B cell (primary cell): ENCODE measurements at regions of chr7 and their contacts with region 1.

Region 1: DNA sequence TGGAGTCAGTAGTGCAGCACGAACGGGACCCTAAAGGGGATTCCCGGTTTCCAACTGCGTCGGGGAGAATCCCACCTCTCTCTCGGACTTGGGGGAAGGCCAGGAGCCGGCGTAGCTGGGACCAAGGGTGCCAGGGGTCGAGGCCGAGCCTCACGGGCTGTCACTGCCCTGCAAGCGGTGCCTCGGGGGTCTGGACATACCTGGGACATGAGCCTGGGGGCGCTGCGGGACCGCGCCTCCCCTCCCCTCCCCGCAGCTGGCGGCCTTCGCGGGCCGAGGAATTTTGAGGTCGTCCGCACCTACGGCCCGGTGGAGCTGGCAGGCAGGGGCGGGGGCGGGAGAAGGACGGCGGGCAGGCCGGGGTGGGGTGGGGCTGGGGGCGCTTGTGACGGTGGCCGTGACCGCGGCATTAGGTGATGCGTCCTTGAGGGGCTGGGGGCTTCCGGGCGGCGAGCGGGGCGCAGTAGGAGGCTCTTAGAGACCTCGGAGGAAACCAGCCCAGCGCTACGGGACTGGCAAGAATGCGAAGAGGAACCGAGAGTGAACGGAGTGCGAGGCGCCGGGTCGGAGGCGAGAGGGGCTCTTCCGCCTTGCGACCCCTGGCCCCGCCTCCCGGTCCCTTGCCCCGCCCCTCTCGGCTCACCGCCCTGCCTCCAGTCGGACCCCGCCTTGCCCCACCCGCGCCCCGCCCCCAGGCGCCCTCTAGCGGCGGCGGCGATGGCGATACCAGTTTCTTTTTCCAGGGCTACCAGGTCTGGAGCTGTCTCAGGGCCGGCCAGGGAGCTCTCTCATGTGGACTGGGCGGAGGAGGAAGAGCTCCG is 48.3 kb downstream of the NPVF start:
- DNase-seq: peak; percentile 97
- ATAC-seq: peak; percentile 99
- H3K4me3 ChIP-seq: peak overlapping the region; percentile 44 to 77 (median 74)
- H3K4me3 Mint-ChIP-seq: peak overlapping the region; percentile 90
- H3K27ac ChIP-seq: peak overlapping the region; percentile 92 to 94
- H3K27ac Mint-ChIP-seq: peak overlapping the region; percentile 96
- H3K4me1 ChIP-seq: peaks cover 7 to 15% of the 10 kb centered on the region in 2 donors
- H3K4me1 Mint-ChIP-seq: peaks cover 17% of the 10 kb centered on the region
- H3K27me3 ChIP-seq: peaks cover 0 to 3% (median 0%) of the 10 kb centered on the region in 4 experiments
- H3K27me3 Mint-ChIP-seq: peaks cover 4% of the 10 kb centered on the region
- CTCF ChIP-seq: peak; percentile 87

Region 2: GRCh38 chr7:25117226-25118047 is 62.5 kb before region 1 on chr7:
- CTCF ChIA-PET with region 1: interaction called, 8 read pairs
- POLR2A ChIA-PET with region 1: interaction called, 5 read pairs
- intact Hi-C with region 1: loop called (anchors 2 kb)
- DNase-seq: peak; percentile 81
- ATAC-seq: peak; percentile 89
- H3K4me3 ChIP-seq: peak overlapping the region; percentile 12 to 54 (median 40)
- H3K4me3 Mint-ChIP-seq: peak overlapping the region; percentile 87
- H3K27ac ChIP-seq: peak overlapping the region; percentile 71 to 82
- H3K27ac Mint-ChIP-seq: peak overlapping the region; percentile 97
- H3K4me1 ChIP-seq: peaks cover 27% of the 10 kb centered on the region in 2 donors
- H3K4me1 Mint-ChIP-seq: peaks cover 41% of the 10 kb centered on the region
- H3K27me3 ChIP-seq: no peaks in the 10 kb centered on the region
- H3K27me3 Mint-ChIP-seq: no peaks in the 10 kb centered on the region
- CTCF ChIP-seq: no peak

Region 3: DNA sequence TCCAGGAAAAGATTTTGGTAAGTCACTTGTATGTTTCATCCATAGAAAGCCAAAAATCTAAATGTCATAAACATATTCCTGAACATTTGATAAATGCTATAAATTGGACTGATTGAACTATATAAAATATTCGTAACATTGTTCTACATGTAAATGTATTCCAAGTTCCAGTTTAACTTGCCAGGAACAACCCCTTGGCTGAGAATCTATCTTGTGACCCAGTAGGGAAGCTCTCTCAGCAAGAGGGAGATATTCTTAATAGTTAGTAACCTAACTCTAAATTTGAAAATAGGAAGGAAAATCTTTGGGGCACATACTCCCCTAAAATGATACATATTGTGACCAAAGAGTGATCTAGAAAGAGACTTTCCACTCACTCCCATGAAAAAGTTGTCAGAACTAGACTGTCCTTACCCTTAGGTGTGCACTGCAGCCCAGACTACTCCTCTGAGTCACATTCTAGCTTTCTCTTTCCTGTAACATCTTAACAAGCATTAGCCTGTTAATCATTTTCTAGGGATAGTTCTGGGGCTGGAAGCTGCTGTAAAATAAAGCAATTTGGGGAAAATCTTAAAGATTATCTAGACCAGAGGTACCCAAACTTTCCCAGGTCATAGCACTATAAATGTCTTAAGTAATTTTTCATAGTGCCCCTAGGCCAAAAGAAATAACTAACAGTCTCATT is 1758.1 kb after region 1 on chr7:
- CTCF ChIA-PET with region 1: no interaction called
- POLR2A ChIA-PET with region 1: no interaction called
- intact Hi-C with region 1: no loop called
- DNase-seq: no peak
- ATAC-seq: no peak
- H3K4me3 ChIP-seq: no peak overlapping the region
- H3K4me3 Mint-ChIP-seq: no peak overlapping the region
- H3K27ac ChIP-seq: no peak overlapping the region
- H3K27ac Mint-ChIP-seq: no peak overlapping the region
- H3K4me1 ChIP-seq: no peaks in the 10 kb centered on the region
- H3K4me1 Mint-ChIP-seq: no peaks in the 10 kb centered on the region
- H3K27me3 ChIP-seq: peaks cover 0 to 2% (median 0%) of the 10 kb centered on the region in 4 experiments
- H3K27me3 Mint-ChIP-seq: peaks cover 10% of the 10 kb centered on the region
- CTCF ChIP-seq: no peak